ENCODE measurements at regions of chr12 and their contacts with region 1.

Region 1: GRCh38 chr12:118436002-118436730 is 59.8 kb downstream of the SUDS3 start:
- DNase-seq: no peak
- H3K4me3 ChIP-seq: no peak overlapping the region
- H3K27ac ChIP-seq: no peak overlapping the region
- H3K27me3 ChIP-seq: no peaks in the 10 kb centered on the region
- CTCF ChIP-seq: no peak

Region 2: DNA sequence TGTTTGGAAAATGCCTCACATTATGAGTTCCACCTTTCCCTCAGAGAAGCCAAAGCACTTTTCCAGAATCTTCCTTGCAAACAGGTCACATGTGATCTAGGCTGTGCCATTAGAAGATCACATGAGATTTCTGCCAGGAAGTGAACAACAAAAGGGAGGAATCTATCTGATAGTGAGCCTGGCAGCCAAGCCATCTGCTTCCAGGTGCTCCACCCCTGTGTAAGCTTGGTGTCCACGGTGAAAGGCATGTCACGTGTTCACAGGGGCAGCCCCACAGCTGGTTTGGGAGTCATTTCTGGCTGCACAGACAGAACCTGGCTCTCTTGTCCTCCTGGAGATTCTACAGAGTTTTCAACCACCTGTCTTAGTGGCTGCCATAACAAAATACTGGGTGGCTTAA is 463.9 kb before region 1 on chr12:
- CTCF ChIA-PET with region 1: no interaction called
- POLR2A ChIA-PET with region 1: interaction called, 13 read pairs
- DNase-seq: no peak
- H3K4me3 ChIP-seq: no peak overlapping the region
- H3K27ac ChIP-seq: no peak overlapping the region
- H3K27me3 ChIP-seq: peaks cover 20% of the 10 kb centered on the region
- CTCF ChIP-seq: no peak

Measured in AG04450 (cell line).